A673 (cell line): ENCODE measurements at regions of chr2 and their contacts with region 1.

Region 1: DNA sequence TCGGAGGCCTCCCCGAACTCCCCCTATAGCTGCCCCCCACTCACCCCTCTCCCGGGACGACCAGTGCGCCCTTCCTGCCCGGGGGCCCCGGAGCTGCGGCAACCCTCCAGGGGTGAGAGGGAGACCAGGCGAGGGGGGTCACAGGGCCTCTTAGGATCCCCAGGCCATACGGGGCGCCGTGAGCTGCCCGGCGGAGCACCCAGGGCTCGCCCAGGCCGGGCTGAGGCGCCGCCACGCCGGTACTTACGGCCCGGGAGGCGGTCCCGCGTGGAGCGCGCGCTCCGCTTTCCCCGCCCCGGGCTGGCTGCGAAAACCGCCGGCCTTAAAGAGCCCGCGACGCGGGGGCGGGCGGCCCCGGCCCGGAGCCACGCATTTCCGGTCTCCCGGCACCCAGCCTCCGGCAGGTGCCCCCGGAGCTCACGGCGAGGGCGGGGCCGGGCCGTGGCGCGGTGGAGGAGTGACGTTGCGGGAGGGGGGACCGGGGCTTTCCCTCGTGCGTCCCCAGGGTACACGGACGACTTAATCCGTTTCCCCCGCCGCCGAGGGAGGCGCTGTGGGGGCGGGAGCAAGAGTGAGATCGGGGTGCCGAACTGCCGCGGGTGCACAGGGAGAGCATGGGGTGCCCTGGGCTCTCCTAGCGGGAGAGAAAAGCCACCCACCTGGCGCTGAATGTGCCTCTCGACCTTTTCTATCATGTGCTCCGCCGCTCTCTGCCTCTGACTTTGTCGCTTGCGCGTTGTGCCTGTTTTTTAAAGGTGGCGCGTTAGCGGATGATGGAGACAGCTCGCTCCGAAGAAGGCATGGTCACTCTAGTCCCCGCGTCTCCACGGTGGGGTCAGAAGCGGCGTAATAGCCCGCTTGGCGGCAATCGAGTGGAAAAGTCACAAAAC is at the start of gene METTL21A:
- DNase-seq: peak; percentile 94
- H3K4me3 ChIP-seq: peak within 1 kb of the TSS; percentile 78
- H3K27ac ChIP-seq: peak within 1 kb of the TSS; percentile 94
- H3K4me1 ChIP-seq: peaks cover 8% of the 10 kb centered on the region
- H3K27me3 ChIP-seq: no peaks in the 10 kb centered on the region
- CTCF ChIP-seq: peak; percentile 49; the same call in 1 of the 2 replicates
- total RNA-seq, gene METTL21A: 35.5 and 40.4 TPM in 2 replicates

Region 2: GRCh38 chr2:206800506-206801417 is 824.5 kb before region 1 on chr2:
- CTCF ChIA-PET with region 1: no interaction called
- POLR2A ChIA-PET with region 1: no interaction called
- intact Hi-C with region 1: loop called (anchors 10 kb)
- DNase-seq: peak; percentile 80
- H3K4me3 ChIP-seq: no peak overlapping the region
- H3K27ac ChIP-seq: no peak overlapping the region
- H3K4me1 ChIP-seq: no peaks in the 10 kb centered on the region
- H3K27me3 ChIP-seq: no peaks in the 10 kb centered on the region
- CTCF ChIP-seq: peak; percentile 74

Region 3: GRCh38 chr2:207710814-207711740 is 85.8 kb after region 1 on chr2 and contains the start of gene CCNYL1:
- CTCF ChIA-PET with region 1: interaction called, 5 read pairs
- POLR2A ChIA-PET with region 1: interaction called, 3 read pairs
- intact Hi-C with region 1: loop called (anchors 5 kb)
- DNase-seq: peak; percentile 99
- H3K4me3 ChIP-seq: peak within 1 kb of the TSS; percentile 90
- H3K27ac ChIP-seq: peak within 1 kb of the TSS; percentile 79
- H3K4me1 ChIP-seq: peaks cover 5% of the 10 kb centered on the region
- H3K27me3 ChIP-seq: no peaks in the 10 kb centered on the region
- CTCF ChIP-seq: no peak
- total RNA-seq, gene CCNYL1: 8.7 and 12.8 TPM in 2 replicates

Region 4: GRCh38 chr2:207974216-207974605 is 348.9 kb after region 1 on chr2:
- CTCF ChIA-PET with region 1: no interaction called
- POLR2A ChIA-PET with region 1: no interaction called
- intact Hi-C with region 1: loop called (anchors 10 kb)
- DNase-seq: no peak
- H3K4me3 ChIP-seq: no peak overlapping the region
- H3K27ac ChIP-seq: no peak overlapping the region
- H3K4me1 ChIP-seq: peaks cover 11% of the 10 kb centered on the region
- H3K27me3 ChIP-seq: no peaks in the 10 kb centered on the region
- CTCF ChIP-seq: no peak

Region 5: GRCh38 chr2:208072250-208072892 is 447.1 kb after region 1 on chr2:
- CTCF ChIA-PET with region 1: no interaction called
- POLR2A ChIA-PET with region 1: no interaction called
- intact Hi-C with region 1: loop called (anchors 5 kb)
- DNase-seq: peak; percentile 60
- H3K4me3 ChIP-seq: no peak overlapping the region
- H3K27ac ChIP-seq: no peak overlapping the region
- H3K4me1 ChIP-seq: peaks cover 4% of the 10 kb centered on the region
- H3K27me3 ChIP-seq: no peaks in the 10 kb centered on the region
- CTCF ChIP-seq: peak; percentile 84

Region 6: DNA sequence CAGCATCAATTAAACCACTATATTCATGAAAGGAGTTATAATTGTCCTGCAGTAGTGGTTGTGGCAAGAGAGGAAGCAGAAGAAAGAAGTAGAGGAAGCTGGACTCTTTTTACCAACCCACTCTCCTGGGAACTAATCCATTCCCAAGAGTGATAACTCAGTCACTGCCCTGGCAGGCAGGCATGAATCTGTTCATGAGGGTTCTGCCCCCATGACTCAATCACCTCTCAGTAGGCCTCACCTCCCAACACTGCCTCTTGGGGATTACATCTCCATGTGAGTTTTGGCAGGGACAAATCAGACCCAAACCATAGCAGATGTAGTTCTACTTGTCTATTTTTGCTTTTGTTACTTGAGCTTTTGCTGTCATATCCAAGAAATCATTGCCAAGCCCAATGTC is 1565.9 kb after region 1 on chr2:
- CTCF ChIA-PET with region 1: no interaction called
- POLR2A ChIA-PET with region 1: no interaction called
- intact Hi-C with region 1: no loop called
- DNase-seq: peak; percentile 12
- H3K4me3 ChIP-seq: no peak overlapping the region
- H3K27ac ChIP-seq: no peak overlapping the region
- H3K4me1 ChIP-seq: no peaks in the 10 kb centered on the region
- H3K27me3 ChIP-seq: peaks cover 8% of the 10 kb centered on the region
- CTCF ChIP-seq: no peak